Transverse colon (tissue), 4 donors: ENCODE measurements at regions of chr14 and their contacts with region 1.

Region 1: GRCh38 chr14:100410056-100410565 is 87.0 kb downstream of the SLC25A47 start:
- DNase-seq: no peak
- H3K4me3 ChIP-seq: no peak overlapping the region
- H3K27ac ChIP-seq: no peak overlapping the region
- H3K4me1 ChIP-seq: peaks cover 5 to 30% (median 26%) of the 10 kb centered on the region in 4 donors
- H3K27me3 ChIP-seq: no peaks in the 10 kb centered on the region
- CTCF ChIP-seq: no peak
- EP300 ChIP-seq: no peak
- POLR2A ChIP-seq: no peak

Region 2: DNA sequence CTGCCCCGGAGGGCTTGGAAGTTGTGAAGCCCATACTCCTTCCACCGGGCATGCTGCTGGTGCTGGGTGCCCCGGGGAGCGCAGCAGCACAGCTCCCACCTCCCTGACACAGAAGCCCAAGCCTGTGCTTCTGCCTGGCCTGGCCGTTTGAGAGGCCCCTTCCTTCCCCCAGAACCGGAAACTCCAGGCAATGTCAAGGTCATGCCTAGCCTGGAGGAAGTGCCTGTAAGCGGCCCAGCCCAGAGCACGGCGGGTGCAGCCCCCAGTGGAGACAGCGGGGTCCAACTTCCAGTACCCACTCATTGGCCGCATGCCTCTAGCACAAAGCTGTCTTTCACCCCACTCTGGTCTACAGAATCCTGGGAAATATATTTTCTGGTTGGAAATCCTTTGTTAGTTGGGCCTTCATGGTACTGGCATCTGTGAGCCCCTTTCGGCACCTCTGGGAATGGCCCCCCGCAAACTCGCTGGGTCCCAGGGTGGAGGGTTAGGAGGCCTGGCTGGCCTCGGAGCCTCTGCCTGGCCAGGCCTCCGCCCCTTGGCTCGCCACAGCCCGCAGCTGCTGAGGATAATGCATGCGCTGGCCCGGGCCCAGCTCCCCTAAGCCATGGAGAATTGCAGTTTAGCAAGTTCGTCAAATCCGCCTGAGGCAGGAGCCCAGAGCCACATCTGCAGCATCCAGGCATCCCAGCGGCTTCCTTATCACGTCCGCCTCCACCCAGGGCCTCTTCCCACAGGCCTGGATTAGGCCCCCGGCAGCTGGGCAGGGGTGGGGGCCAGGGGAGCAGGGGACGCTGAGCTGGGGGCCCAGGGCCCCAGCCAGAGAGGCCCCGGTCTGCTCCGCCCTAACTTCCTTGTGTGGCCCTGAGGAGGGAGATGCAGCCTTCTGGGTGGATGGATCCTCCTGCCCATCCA is 267.7 kb after region 1 on chr14:
- in situ Hi-C with region 1: no loop called
- intact Hi-C with region 1: no loop called
- DNase-seq: peak; percentile 53
- H3K4me3 ChIP-seq: no peak overlapping the region
- H3K27ac ChIP-seq: peak overlapping the region; percentile 61 to 78 (median 66)
- H3K4me1 ChIP-seq: peaks cover 13 to 49% (median 29%) of the 10 kb centered on the region in 4 donors
- H3K27me3 ChIP-seq: no peaks in the 10 kb centered on the region
- CTCF ChIP-seq: no peak
- EP300 ChIP-seq: no peak
- POLR2A ChIP-seq: no peak

Region 3: GRCh38 chr14:101426466-101426865 is 1016.4 kb after region 1 on chr14:
- in situ Hi-C with region 1: no loop called
- intact Hi-C with region 1: loop called (anchors 5 kb)
- DNase-seq: no peak
- H3K4me3 ChIP-seq: no peak overlapping the region
- H3K27ac ChIP-seq: no peak overlapping the region
- H3K4me1 ChIP-seq: no peaks in the 10 kb centered on the region
- H3K27me3 ChIP-seq: no peaks in the 10 kb centered on the region
- CTCF ChIP-seq: no peak
- EP300 ChIP-seq: no peak
- POLR2A ChIP-seq: no peak